ENCODE measurements at regions of chr2 and their contacts with region 1.

Region 1: DNA sequence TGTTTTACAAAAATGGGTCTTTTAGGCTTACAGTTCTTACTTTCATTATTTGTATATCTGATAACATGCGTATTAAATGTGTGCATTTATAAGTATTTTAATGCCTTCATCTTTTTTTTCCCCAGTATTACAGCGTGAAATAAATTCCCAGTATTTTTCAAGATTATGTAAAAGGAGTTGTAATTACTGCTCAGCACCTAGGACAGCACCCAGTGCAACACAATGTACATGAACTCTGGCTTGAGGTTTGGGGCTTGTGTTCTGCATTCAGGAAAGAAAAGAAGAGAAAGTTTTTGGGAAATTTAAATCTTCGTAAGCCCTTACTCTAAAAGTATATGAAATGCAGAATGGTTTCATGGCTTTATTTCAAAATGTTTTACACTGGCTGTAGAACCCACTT is 16.7 kb downstream of the ZNF638 start:
- DNase-seq: no peak
- ATAC-seq: no peak
- H3K4me3 ChIP-seq: no peak overlapping the region
- H3K27ac ChIP-seq: no peak overlapping the region
- H3K4me1 ChIP-seq: no peaks in the 10 kb centered on the region
- H3K27me3 ChIP-seq: no peaks in the 10 kb centered on the region
- CTCF ChIP-seq: no peak

Region 2: DNA sequence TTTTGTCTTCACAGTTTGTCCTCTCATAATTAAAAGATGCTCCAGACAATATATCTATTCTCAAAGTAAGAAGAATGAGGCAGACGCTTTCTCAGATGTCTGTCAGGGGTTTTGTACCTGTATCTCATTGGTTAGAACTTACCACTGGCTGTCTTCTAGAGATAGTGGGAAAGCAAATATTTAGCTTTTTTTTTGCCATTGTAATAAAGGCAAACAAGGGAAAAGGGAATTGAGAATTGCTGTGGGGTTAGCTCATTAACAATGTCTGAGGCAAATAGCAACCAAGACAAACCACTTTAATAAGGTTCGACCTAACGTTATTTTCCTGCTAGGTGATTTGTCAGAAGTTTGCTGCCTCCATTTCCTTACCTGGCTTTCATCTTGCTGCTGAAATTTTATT is 13.3 kb after region 1 on chr2:
- CTCF ChIA-PET with region 1: interaction called, 5 read pairs
- POLR2A ChIA-PET with region 1: interaction called, 11 read pairs
- in situ Hi-C with region 1: no loop called
- intact Hi-C with region 1: no loop called
- DNase-seq: no peak
- ATAC-seq: no peak
- H3K4me3 ChIP-seq: no peak overlapping the region
- H3K27ac ChIP-seq: no peak overlapping the region
- H3K4me1 ChIP-seq: no peaks in the 10 kb centered on the region
- H3K27me3 ChIP-seq: no peaks in the 10 kb centered on the region
- CTCF ChIP-seq: no peak

Region 3: GRCh38 chr2:71578767-71579342 is 230.6 kb after region 1 on chr2:
- CTCF ChIA-PET with region 1: no interaction called
- POLR2A ChIA-PET with region 1: no interaction called
- in situ Hi-C with region 1: no loop called
- intact Hi-C with region 1: no loop called
- DNase-seq: no peak
- ATAC-seq: no peak
- H3K4me3 ChIP-seq: no peak overlapping the region
- H3K27ac ChIP-seq: no peak overlapping the region
- H3K4me1 ChIP-seq: no peaks in the 10 kb centered on the region
- H3K27me3 ChIP-seq: no peaks in the 10 kb centered on the region
- CTCF ChIP-seq: no peak